Uterus (tissue), 4 donors: ENCODE measurements at regions of chr15 and their contacts with region 1.

Region 1: DNA sequence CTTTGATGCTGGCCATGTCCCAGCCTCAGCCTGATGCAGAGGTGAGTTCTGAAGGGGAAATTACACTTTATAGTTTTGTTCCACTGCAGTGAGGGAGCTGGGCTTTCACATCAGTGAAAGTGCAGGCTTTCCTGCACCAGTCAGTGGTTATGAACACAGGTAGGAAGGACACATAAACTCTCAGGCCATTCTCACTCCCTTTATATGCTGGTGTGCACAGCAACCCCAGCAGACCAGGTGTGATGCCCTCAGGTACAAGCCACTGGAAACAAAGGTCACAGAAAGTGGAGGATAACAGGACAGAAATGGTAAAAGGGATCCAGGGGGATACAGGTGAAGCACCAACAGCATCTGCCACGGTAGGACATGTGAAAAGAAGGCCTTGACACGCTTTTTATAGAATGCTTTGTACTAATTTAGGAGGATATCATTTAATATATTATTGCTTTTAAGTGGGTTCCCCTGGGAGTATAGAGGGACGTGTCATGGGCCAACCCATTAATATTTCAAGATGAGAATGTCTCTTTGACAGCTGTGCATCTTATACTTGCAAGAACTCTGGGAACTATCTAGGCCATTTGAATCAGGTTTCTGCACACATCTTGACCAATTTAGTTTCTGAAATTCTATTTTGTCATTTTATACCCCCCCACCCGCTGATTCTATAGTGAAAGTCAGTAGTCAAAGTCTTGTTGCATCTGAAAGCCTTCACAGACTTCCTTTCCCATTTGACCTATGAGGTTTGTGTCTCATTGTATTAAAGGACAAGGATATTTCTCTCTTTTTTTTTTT is 25.0 kb upstream of the BLM start:
- DNase-seq: no peak
- H3K4me3 ChIP-seq: no peak overlapping the region
- H3K27ac ChIP-seq: no peak overlapping the region
- H3K4me1 ChIP-seq: no peaks in the 10 kb centered on the region
- H3K27me3 ChIP-seq: no peaks in the 10 kb centered on the region
- CTCF ChIP-seq: no peak
- POLR2A ChIP-seq: no peak

Region 2: GRCh38 chr15:90449206-90449735 is 242.9 kb before region 1 on chr15:
- intact Hi-C with region 1: no loop called
- DNase-seq: no peak
- H3K4me3 ChIP-seq: no peak overlapping the region
- H3K27ac ChIP-seq: no peak overlapping the region
- H3K4me1 ChIP-seq: no peaks in the 10 kb centered on the region
- H3K27me3 ChIP-seq: no peaks in the 10 kb centered on the region
- CTCF ChIP-seq: no peak
- POLR2A ChIP-seq: no peak

Region 3: GRCh38 chr15:90648137-90649070 is 43.8 kb before region 1 on chr15:
- intact Hi-C with region 1: loop called (anchors 10 kb)
- DNase-seq: peak; percentile 79 to 87
- H3K4me3 ChIP-seq: no peak overlapping the region
- H3K27ac ChIP-seq: peak overlapping the region; percentile 65 to 82
- H3K4me1 ChIP-seq: peaks cover 4% of the 10 kb centered on the region in 2 donors
- H3K27me3 ChIP-seq: no peaks in the 10 kb centered on the region
- CTCF ChIP-seq: peak; percentile 89 to 93 (median 92)
- POLR2A ChIP-seq: no peak